Left cardiac atrium (tissue), 4 donors: ENCODE measurements at regions of chr2 and their contacts with region 1.

Region 1: DNA sequence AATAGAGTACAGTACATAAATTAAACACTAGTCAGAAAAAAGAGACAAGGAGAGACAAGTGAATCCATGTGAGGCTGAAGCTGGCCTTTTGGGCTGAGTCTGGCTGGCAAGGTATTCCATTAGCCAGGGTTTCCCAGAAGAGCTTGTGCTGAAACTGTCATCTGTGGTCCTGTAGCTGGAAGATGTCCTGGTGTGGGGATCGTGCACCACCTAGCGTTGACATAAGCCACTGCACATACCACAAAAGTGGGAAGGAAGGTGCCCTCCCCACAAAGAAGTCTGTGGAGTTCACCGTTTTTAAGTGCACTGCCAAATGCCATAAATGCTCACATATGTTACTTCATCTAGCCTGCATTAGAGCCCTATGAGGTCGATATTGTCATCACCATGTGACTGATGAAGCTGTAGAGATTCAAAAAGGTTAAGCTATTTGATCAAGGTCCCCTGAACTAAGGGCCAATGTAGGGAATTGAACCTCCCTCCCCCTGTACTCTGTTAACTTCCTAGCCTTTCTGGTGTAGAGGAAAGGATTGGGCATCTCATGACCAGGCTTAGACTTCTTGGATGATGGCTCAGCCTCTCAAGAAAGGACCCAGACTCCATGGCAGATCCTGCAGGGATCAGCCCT is 31.9 kb upstream of the GALNT14 start:
- DNase-seq: peak; percentile 52
- ATAC-seq: peak; percentile 82 to 83

Region 2: GRCh38 chr2:29950481-29950880 is 1219.7 kb before region 1 on chr2:
- intact Hi-C with region 1: no loop called
- DNase-seq: no peak
- ATAC-seq: no peak

Region 3: GRCh38 chr2:30736461-30737325 is 433.5 kb before region 1 on chr2:
- intact Hi-C with region 1: loop called in 1 of 2 experiments (anchors 10 kb)
- DNase-seq: no peak
- ATAC-seq: no peak

Region 4: GRCh38 chr2:30862054-30862651 is 308.0 kb before region 1 on chr2:
- intact Hi-C with region 1: loop called in 1 of 2 experiments (anchors 10 kb)
- DNase-seq: peak; percentile 61
- ATAC-seq: peak in 1 of 2 donors; percentile 44

Region 5: GRCh38 chr2:31333527-31334183 is 163.5 kb after region 1 on chr2:
- intact Hi-C with region 1: loop called in 1 of 2 experiments (anchors 2 kb)
- DNase-seq: peak; percentile 78
- ATAC-seq: peak; percentile 66 to 79

Region 6: DNA sequence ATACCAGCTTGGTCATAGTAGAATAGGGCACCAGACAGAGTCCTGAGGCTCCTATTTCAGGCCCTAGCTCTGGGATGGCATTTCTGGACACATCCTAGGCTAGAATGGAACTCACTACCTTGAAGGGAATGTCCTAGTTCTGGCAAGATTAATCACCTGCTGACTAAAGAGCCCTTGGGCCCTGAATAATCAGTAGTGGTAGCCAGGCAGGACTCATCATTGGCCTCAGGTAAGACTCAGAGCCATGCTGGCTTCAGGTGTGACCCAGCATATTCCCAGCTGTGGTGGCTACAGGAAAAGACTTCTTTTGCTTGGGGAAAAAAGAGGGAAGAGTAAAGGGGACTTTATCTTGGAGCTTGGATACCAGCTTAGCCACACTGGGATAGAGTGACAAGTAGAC is 541.6 kb after region 1 on chr2:
- intact Hi-C with region 1: no loop called
- DNase-seq: no peak
- ATAC-seq: no peak